ENCODE measurements at regions of chr6 and their contacts with region 1.

Region 1: DNA sequence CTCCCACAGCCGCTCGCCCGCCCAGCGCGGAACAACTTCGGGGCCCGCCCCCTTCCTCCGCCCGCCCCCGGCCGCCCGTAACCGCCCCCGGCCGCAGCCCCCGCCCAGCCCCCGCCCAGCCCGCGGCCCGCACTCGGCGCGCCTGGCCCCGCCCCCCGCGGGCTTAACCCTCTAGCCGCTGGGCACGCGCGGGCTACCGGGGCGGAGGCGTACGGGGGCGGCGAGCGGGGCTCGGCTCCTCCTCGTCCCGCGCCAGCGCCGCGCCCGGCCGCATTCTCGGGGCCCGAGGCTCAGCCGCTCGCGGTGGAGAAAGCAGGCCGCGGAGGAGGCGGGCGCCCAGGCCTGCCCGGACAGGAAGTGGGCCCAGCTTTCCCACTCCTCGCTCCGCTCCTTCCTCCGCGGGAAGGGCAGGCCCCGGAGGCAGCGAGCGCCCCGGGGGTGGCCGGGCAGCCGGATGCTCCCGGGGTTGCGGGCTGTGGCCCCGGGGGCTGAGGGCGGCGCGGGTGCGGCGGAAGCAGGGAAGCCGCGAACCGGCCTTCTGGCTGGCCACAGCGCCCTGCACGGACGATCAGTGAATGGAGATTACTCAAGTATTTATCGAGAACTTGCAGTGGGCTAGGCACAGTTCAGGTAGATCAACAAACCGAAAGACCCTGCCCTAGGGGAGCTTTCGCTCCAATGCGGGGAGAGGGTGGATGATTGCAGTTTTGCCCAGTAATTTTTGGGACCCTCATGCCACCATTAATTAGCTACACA is at the start of gene TRAM2:
- DNase-seq: peak; percentile 73
- H3K4me3 Mint-ChIP-seq: peak within 1 kb of the TSS; percentile 69
- H3K27ac Mint-ChIP-seq: peak within 1 kb of the TSS; percentile 85
- H3K4me1 Mint-ChIP-seq: peaks cover 31% of the 10 kb centered on the region
- H3K27me3 Mint-ChIP-seq: no peaks in the 10 kb centered on the region
- CTCF ChIP-seq: peak; percentile 26
- total RNA-seq, gene TRAM2: 9.9 and 10.1 TPM in 2 replicates

Region 2: GRCh38 chr6:52566853-52567279 is 10.3 kb before region 1 on chr6:
- CTCF ChIA-PET with region 1: interaction called, 13 read pairs
- POLR2A ChIA-PET with region 1: interaction called, 6 read pairs
- intact Hi-C with region 1: no loop called
- DNase-seq: peak; percentile 86
- H3K4me3 Mint-ChIP-seq: peak overlapping the region; percentile 25
- H3K27ac Mint-ChIP-seq: peak overlapping the region; percentile 80
- H3K4me1 Mint-ChIP-seq: peaks cover 20% of the 10 kb centered on the region
- H3K27me3 Mint-ChIP-seq: no peaks in the 10 kb centered on the region
- CTCF ChIP-seq: no peak

Region 3: GRCh38 chr6:52590152-52590931 is 13.1 kb after region 1 on chr6:
- CTCF ChIA-PET with region 1: interaction called, 20 read pairs
- POLR2A ChIA-PET with region 1: interaction called, 9 read pairs
- intact Hi-C with region 1: no loop called
- DNase-seq: peak; percentile 68
- H3K4me3 Mint-ChIP-seq: no peak overlapping the region
- H3K27ac Mint-ChIP-seq: no peak overlapping the region
- H3K4me1 Mint-ChIP-seq: peaks cover 19% of the 10 kb centered on the region
- H3K27me3 Mint-ChIP-seq: no peaks in the 10 kb centered on the region
- CTCF ChIP-seq: peak; percentile 11

Region 4: DNA sequence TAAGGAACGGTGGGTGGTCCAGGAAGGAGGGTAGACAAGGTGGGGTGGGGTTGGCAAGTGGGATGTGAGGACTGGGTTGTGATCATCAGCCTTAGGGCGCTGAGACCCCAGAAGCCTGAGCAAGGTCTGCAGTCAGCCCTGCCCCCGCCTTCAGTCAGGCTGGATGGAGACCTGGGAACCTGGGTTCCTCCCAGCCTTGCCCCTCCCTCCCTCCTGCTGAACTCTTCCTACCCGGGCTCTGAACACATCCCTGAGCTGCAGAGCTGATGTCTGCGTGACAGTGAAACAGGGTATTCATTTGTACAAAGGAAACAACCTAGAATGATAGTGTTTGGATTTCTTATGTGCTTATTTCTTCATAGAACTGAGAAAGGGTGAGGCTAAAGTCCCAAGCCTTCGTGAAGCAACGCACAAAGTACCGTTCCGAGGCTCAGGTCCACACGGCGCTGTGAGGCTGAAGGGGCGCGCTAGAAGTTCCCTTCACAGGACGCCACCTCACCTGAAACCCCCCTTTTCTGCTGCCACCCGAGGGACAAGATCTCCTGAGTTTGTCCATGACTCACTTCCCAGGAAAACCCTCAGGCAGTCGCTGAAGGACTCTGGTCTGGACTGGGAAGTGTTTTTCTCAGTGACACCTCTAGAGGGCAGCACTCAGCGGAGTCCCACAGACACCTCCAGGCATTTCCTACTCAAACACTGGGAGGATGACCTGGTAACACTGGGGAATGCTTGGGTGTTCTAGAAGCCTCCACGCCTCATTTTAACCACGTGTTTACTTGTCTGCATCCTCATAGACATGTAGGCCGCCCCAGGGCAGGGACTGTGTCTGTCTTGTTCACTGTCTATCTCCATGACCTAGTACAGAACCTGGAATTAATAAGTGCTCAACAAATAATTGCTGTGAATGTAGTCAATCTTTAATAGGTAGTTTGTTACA is 262.2 kb after region 1 on chr6:
- CTCF ChIA-PET with region 1: no interaction called
- POLR2A ChIA-PET with region 1: no interaction called
- intact Hi-C with region 1: no loop called
- DNase-seq: peak; percentile 81
- H3K4me3 Mint-ChIP-seq: no peak overlapping the region
- H3K27ac Mint-ChIP-seq: no peak overlapping the region
- H3K4me1 Mint-ChIP-seq: no peaks in the 10 kb centered on the region
- H3K27me3 Mint-ChIP-seq: peaks cover 12% of the 10 kb centered on the region
- CTCF ChIP-seq: peak; percentile 61